ENCODE measurements at regions of chr10 and their contacts with region 1.

Region 1: DNA sequence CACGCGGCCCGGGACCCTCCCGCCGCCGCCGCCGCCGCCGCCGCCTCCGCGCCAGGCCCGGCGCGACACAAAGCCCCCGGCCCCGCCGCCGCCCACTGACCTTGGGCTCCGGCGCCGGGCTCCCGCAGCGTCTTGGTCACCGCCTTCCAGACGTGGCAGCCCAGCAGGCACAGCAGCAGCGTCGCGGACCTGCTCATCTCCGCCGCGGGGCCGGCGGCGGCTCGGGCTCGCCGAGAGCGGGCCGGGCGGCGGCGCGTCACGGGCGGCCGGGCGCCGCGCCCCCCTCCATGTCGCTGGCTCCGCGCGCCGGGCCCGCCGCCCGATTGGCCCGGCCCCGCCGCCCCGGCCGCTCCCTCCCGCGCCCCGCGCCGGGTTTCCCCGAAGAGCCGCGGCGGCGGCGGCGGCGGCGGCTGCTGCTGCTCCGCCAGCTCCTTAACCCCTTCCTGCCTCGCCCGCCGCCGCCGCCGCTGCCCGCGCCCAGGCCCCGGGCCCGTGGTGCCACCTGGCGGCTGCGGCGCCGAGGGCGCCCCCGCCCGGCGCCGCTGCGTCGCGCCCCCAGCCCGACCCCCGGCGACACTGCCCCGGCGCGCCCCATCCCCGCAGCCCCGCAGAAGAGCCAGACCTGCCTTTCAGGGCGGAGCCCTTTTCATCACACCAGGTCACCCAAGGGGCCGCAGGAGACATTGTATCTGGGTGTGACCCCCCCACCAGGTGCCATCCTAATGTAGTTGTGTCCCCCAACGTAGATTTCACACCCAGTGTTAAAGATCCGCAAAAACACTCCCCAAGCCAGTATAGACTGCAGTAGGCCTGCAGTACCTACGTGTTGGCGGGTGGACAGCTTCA is at the start of gene FAM171A1:
- DNase-seq: peak in 8 of 10 donors; percentile 24 to 69 (median 62)
- H3K4me3 ChIP-seq: peak within 1 kb of the TSS; percentile 52 to 92 (median 80)
- H3K27ac ChIP-seq: peak within 1 kb of the TSS in 58 of 59 donors; percentile 40 to 94 (median 85)
- H3K27me3 ChIP-seq: no peaks in the 10 kb centered on the region
- CTCF ChIP-seq: peak in 20 of 56 donors; percentile 6 to 56 (median 22)
- total RNA-seq, gene FAM171A1: 79.2 to 197 (median 110) TPM

Region 2: GRCh38 chr10:15209827-15210509 is 161.1 kb before region 1 on chr10:
- intact Hi-C with region 1: loop called (anchors 1 kb)
- DNase-seq: peak; percentile 74 to 94 (median 88)
- H3K4me3 ChIP-seq: peak overlapping the region in 7 of 59 donors; percentile 2 to 26 (median 15)
- H3K27ac ChIP-seq: peak overlapping the region in 34 of 59 donors; percentile 8 to 75 (median 40)
- H3K27me3 ChIP-seq: no peaks in the 10 kb centered on the region
- CTCF ChIP-seq: peak; percentile 77 to 98 (median 91)

Region 3: GRCh38 chr10:15254808-15255648 is 116.1 kb before region 1 on chr10:
- intact Hi-C with region 1: loop called (anchors 1 to 2 kb)
- DNase-seq: peak in 5 of 10 donors; percentile 43 to 76 (median 49)
- H3K4me3 ChIP-seq: peak overlapping the region; percentile 4 to 75 (median 52)
- H3K27ac ChIP-seq: peak overlapping the region; percentile 48 to 95 (median 88)
- H3K27me3 ChIP-seq: no peaks in the 10 kb centered on the region
- CTCF ChIP-seq: peak in 6 of 56 donors; percentile 11 to 22 (median 14)

Region 4: DNA sequence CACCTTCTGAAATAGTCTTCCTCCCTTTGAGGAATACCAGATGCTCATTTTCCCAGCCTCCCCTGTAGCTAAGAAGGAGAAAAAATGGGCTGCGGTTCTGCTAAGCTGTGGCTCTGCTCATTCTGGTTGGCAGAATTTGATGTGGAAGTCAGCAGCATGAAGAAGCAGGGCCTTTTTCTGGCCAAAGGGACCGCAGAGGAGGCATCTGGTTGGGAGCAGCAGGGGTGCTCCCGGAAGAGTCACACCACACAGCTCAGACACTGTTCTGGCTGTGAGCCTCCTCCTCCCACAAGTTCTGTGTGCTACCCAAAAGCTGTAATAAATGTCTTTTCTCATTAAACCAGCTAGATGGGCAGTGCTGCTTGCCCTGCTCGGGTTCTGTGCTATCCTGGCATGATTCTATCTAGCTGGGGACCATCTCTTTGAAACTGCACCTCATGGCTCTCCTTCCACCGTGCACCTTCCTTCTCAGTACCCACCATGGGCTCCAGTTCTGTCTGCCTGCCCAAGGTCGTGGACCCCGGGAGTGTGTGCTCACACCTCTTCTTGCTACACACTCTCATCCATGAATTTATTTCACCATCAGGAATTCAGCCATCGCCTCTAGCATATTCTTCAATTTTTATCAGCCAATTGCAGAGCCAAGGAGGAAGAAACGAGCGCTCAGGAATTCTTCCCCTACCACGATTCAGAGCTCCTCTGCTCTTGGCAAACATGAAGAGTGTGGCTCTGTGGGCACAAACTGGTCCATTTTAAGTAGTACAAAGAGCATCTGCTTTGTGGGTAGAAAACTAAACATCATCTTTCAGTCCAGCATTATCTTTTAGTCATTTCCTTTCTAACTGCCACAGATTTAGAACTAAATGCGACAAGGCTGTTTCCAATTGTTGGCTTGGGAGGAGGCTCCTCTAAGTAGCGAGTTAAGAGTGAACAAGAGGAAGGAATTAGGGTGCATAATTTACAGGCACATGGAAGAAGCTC is 76.9 kb before region 1 on chr10:
- intact Hi-C with region 1: loop called in 1 of 2 experiments (anchors 5 kb)
- DNase-seq: peak in 7 of 10 donors; percentile 41 to 76 (median 68)
- H3K4me3 ChIP-seq: peak overlapping the region in 45 of 59 donors; percentile 0 to 46 (median 19)
- H3K27ac ChIP-seq: peak overlapping the region; percentile 37 to 93 (median 85)
- H3K27me3 ChIP-seq: no peaks in the 10 kb centered on the region
- CTCF ChIP-seq: no peak

Region 5: GRCh38 chr10:15313843-15314242 is 57.2 kb before region 1 on chr10:
- intact Hi-C with region 1: loop called (anchors 2 to 5 kb)
- DNase-seq: peak; percentile 28 to 78 (median 63)
- H3K4me3 ChIP-seq: peak overlapping the region in 47 of 59 donors; percentile 1 to 57 (median 28)
- H3K27ac ChIP-seq: peak overlapping the region; percentile 76 to 99 (median 93)
- H3K27me3 ChIP-seq: no peaks in the 10 kb centered on the region
- CTCF ChIP-seq: peak in 2 of 56 donors; percentile 9 to 17

Region 6: GRCh38 chr10:15353471-15354017 is 17.5 kb before region 1 on chr10:
- intact Hi-C with region 1: no loop called
- DNase-seq: no peak
- H3K4me3 ChIP-seq: no peak overlapping the region
- H3K27ac ChIP-seq: peak overlapping the region in 17 of 59 donors; percentile 0 to 54 (median 38)
- H3K27me3 ChIP-seq: no peaks in the 10 kb centered on the region
- CTCF ChIP-seq: no peak

Region 7: GRCh38 chr10:15515202-15515601 is 144.1 kb after region 1 on chr10:
- intact Hi-C with region 1: no loop called
- DNase-seq: peak in 7 of 10 donors; percentile 34 to 83 (median 55)
- H3K4me3 ChIP-seq: peak overlapping the region in 1 of 59 donors; percentile 6
- H3K27ac ChIP-seq: peak overlapping the region in 2 of 59 donors; percentile 14 to 26
- H3K27me3 ChIP-seq: peaks cover 0 to 22% (median 0%) of the 10 kb centered on the region in 45 donors
- CTCF ChIP-seq: no peak